ENCODE measurements at regions of chr10 and their contacts with region 1.

Region 1: GRCh38 chr10:107686095-107686494 is 521.6 kb upstream of the SORCS1 start:
- DNase-seq: no peak
- ATAC-seq: peak; percentile 85
- H3K4me3 Mint-ChIP-seq: no peak overlapping the region
- H3K27ac Mint-ChIP-seq: peak overlapping the region; percentile 51
- H3K4me1 Mint-ChIP-seq: peaks cover 19% of the 10 kb centered on the region
- H3K27me3 Mint-ChIP-seq: no peaks in the 10 kb centered on the region
- CTCF ChIP-seq: no peak

Region 2: DNA sequence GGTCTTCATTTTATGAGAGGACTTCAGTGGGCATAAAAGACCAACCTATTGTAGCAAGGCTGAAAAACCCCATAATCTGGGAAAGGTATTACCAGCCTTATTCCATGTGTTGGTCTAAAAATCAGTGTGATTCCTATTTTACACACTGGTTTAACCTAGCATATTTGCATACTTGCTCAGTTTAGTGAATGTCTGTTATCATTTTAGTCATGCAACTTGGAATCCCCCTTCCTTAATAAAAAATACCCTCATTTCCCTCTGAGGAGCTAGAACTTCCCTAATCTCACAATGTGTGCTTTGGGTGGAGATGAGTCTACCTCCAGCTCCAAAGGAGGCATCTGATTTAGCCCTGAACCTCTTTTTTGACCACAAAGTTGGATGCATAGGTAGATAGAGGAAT is 208.8 kb before region 1 on chr10:
- CTCF ChIA-PET with region 1: no interaction called
- POLR2A ChIA-PET with region 1: no interaction called
- intact Hi-C with region 1: loop called (anchors 10 kb)
- DNase-seq: no peak
- ATAC-seq: peak; percentile 65
- H3K4me3 Mint-ChIP-seq: peak overlapping the region; percentile 65
- H3K27ac Mint-ChIP-seq: peak overlapping the region; percentile 74
- H3K4me1 Mint-ChIP-seq: peaks cover 9% of the 10 kb centered on the region
- H3K27me3 Mint-ChIP-seq: no peaks in the 10 kb centered on the region
- CTCF ChIP-seq: no peak

Measured in activated B cell treated with CpG ODN at 0.5 μM for 24 hours (primary cell).